Esophagus muscularis mucosa (tissue), 4 donors: ENCODE measurements at regions of chr3 and their contacts with region 1.

Region 1: DNA sequence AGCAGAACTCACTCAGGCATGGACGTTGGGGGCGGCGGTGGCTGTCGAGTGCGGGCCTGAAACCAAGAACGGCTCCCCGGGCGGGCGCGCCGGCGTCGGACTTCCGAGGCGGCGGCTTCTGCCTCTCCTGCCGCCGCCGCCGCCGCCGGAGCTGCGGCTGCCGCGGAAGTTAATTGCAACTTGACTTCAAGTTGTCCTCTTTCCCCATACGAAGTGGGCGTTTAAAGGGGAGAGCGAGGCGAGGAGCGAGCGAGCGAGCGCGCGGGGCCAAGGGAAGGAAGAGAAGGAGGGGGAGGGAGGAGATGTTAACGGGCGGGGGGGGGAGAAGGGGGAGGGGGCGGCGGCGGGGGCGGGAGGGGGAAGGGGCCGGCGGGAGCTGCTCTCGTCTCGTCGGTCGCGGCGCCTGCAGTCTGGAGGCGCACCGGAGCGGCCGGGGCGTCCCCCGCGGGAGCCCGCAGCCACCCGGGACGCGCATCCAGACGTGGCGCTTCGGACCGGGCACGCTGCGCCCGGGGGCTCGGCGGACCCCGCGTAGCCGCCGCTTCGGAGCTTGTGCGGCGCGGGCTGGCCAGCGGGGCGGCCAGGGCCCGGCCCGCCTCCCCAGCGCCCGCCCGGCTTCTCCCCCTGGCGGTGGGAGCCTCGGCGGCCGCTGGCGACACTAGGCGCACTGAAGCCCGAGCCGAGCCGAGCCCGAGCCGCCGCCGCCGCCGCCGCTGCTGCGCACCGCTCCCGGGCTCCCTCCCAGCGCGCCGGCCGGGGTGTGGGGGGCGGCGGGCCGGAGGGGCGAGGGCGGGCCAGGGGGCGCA is 19.7 kb upstream of the SATB1 start:
- DNase-seq: no peak
- H3K4me3 ChIP-seq: peak overlapping the region; percentile 62 to 76 (median 66)
- H3K27ac ChIP-seq: peak overlapping the region; percentile 53 to 76 (median 70)
- H3K4me1 ChIP-seq: peaks cover 20 to 30% (median 29%) of the 10 kb centered on the region in 4 donors
- H3K27me3 ChIP-seq: peaks cover 0 to 20% (median 5%) of the 10 kb centered on the region in 4 donors
- CTCF ChIP-seq: peak; percentile 22 to 64 (median 54)
- EP300 ChIP-seq: no peak
- POLR2A ChIP-seq: no peak

Region 2: DNA sequence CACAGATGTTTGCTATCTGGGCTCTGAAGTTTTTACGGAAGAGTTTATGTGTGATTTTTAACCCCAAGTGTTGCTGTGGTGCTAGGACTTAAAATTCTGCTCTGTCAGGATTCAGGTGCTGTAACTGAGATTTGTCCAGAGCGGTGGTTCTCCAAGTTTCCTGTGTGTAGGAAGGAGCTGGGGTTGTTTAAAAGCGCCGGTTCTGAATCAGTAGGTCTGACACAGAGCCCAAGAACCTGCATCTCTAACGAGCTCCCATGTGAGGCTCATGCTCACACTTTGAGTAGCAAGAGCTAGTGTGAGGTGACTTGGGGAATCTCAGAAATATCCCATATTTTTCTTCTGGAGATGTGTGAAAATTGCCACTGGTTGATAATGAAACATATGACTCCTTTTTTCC is 345.2 kb before region 1 on chr3:
- intact Hi-C with region 1: no loop called
- DNase-seq: no peak
- H3K4me3 ChIP-seq: no peak overlapping the region
- H3K27ac ChIP-seq: no peak overlapping the region
- H3K4me1 ChIP-seq: no peaks in the 10 kb centered on the region
- H3K27me3 ChIP-seq: no peaks in the 10 kb centered on the region
- CTCF ChIP-seq: no peak
- EP300 ChIP-seq: no peak
- POLR2A ChIP-seq: no peak

Region 3: DNA sequence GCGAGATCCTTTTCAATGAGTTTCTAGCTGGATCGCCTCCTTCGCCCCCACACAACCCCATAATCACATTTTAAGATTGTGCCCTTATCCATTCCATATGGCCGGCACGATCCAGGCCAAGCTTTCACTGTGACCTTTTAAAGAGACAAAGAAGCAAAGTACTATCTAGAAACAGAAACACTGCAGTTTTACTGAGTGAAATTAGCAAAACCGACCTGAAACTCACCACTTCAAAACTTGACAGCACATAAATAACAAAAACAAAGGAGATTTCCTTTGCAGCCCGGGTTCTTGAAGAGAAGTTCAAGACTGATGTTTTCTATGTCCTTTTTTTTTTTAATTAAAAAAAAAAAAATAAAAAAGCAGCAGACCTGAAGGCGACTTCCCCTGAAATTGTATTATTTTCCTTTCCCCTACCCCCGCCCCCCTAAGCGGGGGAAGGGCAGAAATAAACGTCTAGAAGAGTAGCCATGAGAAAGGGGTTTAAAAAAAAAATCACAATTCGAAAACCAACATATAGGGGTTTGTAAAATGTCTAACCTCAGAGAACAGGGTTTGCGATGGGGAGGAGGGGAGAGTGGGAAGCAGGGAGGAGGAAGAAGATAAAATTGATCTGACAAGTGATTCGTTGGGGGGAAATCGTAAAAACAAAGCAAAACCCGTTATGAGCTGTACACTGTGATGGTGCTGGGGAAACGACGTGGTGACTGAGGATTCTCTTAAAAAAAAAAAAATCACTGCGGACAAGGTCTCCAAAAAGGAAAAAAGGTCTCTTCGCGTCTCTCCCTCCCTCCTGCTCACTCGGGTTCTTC is 21.2 kb before region 1 on chr3:
- intact Hi-C with region 1: loop called (anchors 2 kb)
- DNase-seq: no peak
- H3K4me3 ChIP-seq: peak overlapping the region; percentile 86 to 94 (median 90)
- H3K27ac ChIP-seq: peak overlapping the region; percentile 87 to 94 (median 90)
- H3K4me1 ChIP-seq: peaks cover 5 to 41% (median 40%) of the 10 kb centered on the region in 4 donors
- H3K27me3 ChIP-seq: no peaks in the 10 kb centered on the region
- CTCF ChIP-seq: no peak
- EP300 ChIP-seq: no peak
- POLR2A ChIP-seq: no peak